B cell (primary cell): ENCODE measurements at regions of chr3 and their contacts with region 1.

Region 1: GRCh38 chr3:183481582-183481981 is 53.2 kb upstream of the MCF2L2 start:
- DNase-seq: no peak
- ATAC-seq: no peak
- H3K4me3 ChIP-seq: no peak overlapping the region
- H3K4me3 Mint-ChIP-seq: no peak overlapping the region
- H3K27ac ChIP-seq: no peak overlapping the region
- H3K27ac Mint-ChIP-seq: no peak overlapping the region
- H3K4me1 ChIP-seq: peaks cover 0 to 5% of the 10 kb centered on the region in 2 donors
- H3K4me1 Mint-ChIP-seq: peaks cover 12% of the 10 kb centered on the region
- H3K27me3 ChIP-seq: no peaks in the 10 kb centered on the region
- H3K27me3 Mint-ChIP-seq: no peaks in the 10 kb centered on the region
- CTCF ChIP-seq: no peak

Region 2: GRCh38 chr3:183400352-183400751 is 81.2 kb before region 1 on chr3:
- CTCF ChIA-PET with region 1: no interaction called
- POLR2A ChIA-PET with region 1: interaction called, 11 read pairs
- intact Hi-C with region 1: no loop called
- DNase-seq: no peak
- ATAC-seq: no peak
- H3K4me3 ChIP-seq: no peak overlapping the region
- H3K4me3 Mint-ChIP-seq: no peak overlapping the region
- H3K27ac ChIP-seq: no peak overlapping the region
- H3K27ac Mint-ChIP-seq: no peak overlapping the region
- H3K4me1 ChIP-seq: no peaks in the 10 kb centered on the region
- H3K4me1 Mint-ChIP-seq: no peaks in the 10 kb centered on the region
- H3K27me3 ChIP-seq: peaks cover 0 to 8% (median 0%) of the 10 kb centered on the region in 4 experiments
- H3K27me3 Mint-ChIP-seq: peaks cover 9% of the 10 kb centered on the region
- CTCF ChIP-seq: no peak

Region 3: GRCh38 chr3:183496311-183496710 is 14.7 kb after region 1 on chr3:
- CTCF ChIA-PET with region 1: no interaction called
- POLR2A ChIA-PET with region 1: no interaction called
- intact Hi-C with region 1: no loop called
- DNase-seq: no peak
- ATAC-seq: no peak
- H3K4me3 ChIP-seq: no peak overlapping the region
- H3K4me3 Mint-ChIP-seq: no peak overlapping the region
- H3K27ac ChIP-seq: no peak overlapping the region
- H3K27ac Mint-ChIP-seq: no peak overlapping the region
- H3K4me1 ChIP-seq: peaks cover 0 to 4% of the 10 kb centered on the region in 2 donors
- H3K4me1 Mint-ChIP-seq: peaks cover under 1% of the 10 kb centered on the region
- H3K27me3 ChIP-seq: no peaks in the 10 kb centered on the region
- H3K27me3 Mint-ChIP-seq: no peaks in the 10 kb centered on the region
- CTCF ChIP-seq: no peak

Region 4: GRCh38 chr3:183576487-183577107 is 95.0 kb after region 1 on chr3:
- CTCF ChIA-PET with region 1: no interaction called
- POLR2A ChIA-PET with region 1: no interaction called
- intact Hi-C with region 1: no loop called
- DNase-seq: peak; percentile 58
- ATAC-seq: peak; percentile 42
- H3K4me3 ChIP-seq: no peak overlapping the region
- H3K4me3 Mint-ChIP-seq: no peak overlapping the region
- H3K27ac ChIP-seq: no peak overlapping the region
- H3K27ac Mint-ChIP-seq: no peak overlapping the region
- H3K4me1 ChIP-seq: peaks cover 9 to 44% of the 10 kb centered on the region in 2 donors
- H3K4me1 Mint-ChIP-seq: peaks cover 55% of the 10 kb centered on the region
- H3K27me3 ChIP-seq: peaks cover 0 to 16% (median 5%) of the 10 kb centered on the region in 4 experiments
- H3K27me3 Mint-ChIP-seq: peaks cover 16% of the 10 kb centered on the region
- CTCF ChIP-seq: no peak